Activated CD8-positive, alpha-beta T cell treated with anti-CD3 and anti-CD28 coated beads, Interleukin-2, amount 10 ng/mL, durations not matched to agents 7 days and 5 days (primary cell): ENCODE measurements at regions of chr16 and their contacts with region 1.

Region 1: GRCh38 chr16:50806099-50807062 is 64.5 kb downstream of the CYLD start:
- DNase-seq: peak; percentile 90
- ATAC-seq: peak; percentile 98
- H3K4me3 Mint-ChIP-seq: peak overlapping the region; percentile 72
- H3K27ac Mint-ChIP-seq: peak overlapping the region; percentile 62
- H3K4me1 Mint-ChIP-seq: peaks cover 18% of the 10 kb centered on the region
- H3K27me3 Mint-ChIP-seq: no peaks in the 10 kb centered on the region

Region 2: DNA sequence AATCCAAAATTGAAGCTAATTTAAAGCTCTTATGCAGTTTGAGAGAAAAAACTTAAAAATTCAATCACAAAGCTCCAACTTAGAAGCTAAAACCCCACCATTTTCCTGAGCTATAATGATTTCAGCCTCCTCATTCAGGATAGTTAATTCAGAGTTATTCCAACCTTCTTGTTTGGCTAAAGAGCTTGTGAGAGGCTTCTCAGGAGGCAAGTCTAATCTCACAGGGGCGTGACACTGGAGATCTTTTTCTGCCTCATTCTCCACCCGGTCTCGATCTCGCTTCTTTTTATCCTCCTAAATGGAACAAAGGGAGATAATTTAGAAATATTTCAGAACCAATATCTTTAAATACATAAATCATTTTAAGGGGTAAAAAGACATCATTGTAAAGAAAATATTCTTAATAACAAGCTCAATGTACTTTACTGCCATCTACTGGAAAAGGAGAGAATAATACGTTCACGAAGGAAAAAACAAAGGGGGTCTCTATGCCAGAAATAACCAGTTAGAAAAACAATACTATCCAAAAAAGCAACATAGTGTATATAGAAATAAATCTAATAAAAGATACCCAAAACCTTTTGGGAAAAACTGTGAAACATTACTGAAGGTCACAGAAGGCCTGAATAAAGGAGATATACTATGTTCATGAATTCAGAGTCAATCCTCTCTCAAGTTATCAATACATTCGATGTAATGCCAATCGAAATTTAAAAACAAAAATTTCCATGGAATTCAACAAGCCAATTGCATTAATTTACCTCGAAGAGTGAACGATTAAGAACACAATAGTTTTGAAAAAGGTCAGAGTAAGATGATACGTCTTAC is 451.5 kb before region 1 on chr16:
- CTCF ChIA-PET with region 1: interaction called, 37 read pairs
- POLR2A ChIA-PET with region 1: no interaction called
- DNase-seq: no peak
- ATAC-seq: no peak
- H3K4me3 Mint-ChIP-seq: no peak overlapping the region
- H3K27ac Mint-ChIP-seq: no peak overlapping the region
- H3K4me1 Mint-ChIP-seq: peaks cover 30% of the 10 kb centered on the region
- H3K27me3 Mint-ChIP-seq: no peaks in the 10 kb centered on the region

Region 3: GRCh38 chr16:50611332-50611934 is 194.9 kb before region 1 on chr16:
- CTCF ChIA-PET with region 1: interaction called, 13 read pairs
- POLR2A ChIA-PET with region 1: no interaction called
- DNase-seq: no peak
- ATAC-seq: peak; percentile 35
- H3K4me3 Mint-ChIP-seq: no peak overlapping the region
- H3K27ac Mint-ChIP-seq: no peak overlapping the region
- H3K4me1 Mint-ChIP-seq: peaks cover 4% of the 10 kb centered on the region
- H3K27me3 Mint-ChIP-seq: no peaks in the 10 kb centered on the region

Region 4: DNA sequence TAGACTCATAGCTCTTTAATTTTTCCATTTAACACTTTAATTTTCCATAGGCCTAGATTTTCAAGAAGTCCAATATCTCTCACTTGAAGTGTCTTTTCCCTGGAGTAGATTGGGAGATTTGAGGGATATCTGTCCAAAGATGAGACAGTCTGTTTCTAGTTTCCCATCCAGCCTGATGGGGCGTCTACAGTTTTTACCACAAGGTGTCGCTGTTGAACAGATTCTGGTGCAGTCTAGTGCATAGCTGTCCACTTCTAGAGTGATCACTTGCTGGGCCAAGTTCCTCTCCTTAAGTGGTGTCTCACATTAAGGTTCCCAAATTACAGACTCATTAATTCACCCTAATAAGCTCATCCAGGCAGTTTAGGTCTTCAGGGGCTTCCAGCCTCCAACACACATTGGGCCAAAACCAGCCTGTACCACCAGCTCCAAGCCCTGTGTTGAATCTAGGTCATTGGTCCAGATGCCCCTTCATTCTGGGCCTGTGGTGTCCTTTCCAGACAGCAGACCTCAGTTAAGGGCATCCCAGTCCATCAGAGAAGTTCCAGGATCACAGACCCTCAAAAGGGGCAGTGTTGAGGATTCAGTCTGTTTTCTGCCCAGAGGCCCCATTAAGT is 134.6 kb before region 1 on chr16:
- CTCF ChIA-PET with region 1: interaction called, 221 read pairs
- POLR2A ChIA-PET with region 1: interaction called, 11 read pairs
- DNase-seq: peak; percentile 74
- ATAC-seq: peak; percentile 14
- H3K4me3 Mint-ChIP-seq: no peak overlapping the region
- H3K27ac Mint-ChIP-seq: no peak overlapping the region
- H3K4me1 Mint-ChIP-seq: peaks cover 40% of the 10 kb centered on the region
- H3K27me3 Mint-ChIP-seq: no peaks in the 10 kb centered on the region

Region 5: DNA sequence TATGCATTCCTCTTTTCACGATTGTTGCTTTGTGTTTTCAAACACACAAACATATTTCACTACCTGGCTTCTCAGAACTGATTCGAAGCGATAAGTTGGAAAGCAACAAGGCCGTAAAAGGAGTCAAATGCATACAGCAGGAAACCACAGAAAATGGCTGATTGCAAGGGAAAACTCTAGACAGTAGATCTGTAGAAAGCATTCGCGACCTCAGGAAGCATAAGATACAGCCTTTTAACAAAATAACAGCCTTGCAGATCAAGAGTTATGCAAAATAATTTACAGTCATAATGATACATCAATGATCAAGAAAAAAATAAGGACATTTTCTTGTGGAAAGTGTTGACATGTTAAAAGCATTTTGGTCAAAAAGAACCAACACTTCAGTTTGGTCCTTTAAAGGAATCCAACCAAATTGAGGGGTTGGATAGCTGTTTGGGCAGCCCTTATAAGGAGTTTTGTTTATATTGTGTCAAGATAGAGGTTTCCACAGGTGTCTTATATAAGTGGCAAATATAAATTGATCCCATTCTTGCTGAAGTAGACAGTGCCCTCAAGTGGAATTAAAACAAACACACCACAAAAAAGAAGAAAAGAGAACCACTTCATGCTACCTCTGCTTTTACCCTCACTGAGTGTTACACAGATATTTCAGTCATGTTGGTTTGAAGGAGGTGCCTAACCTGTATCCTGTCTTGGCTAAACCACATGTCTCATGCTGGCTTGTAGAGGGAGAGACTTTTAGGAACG is 59.0 kb before region 1 on chr16:
- CTCF ChIA-PET with region 1: interaction called, 62 read pairs
- POLR2A ChIA-PET with region 1: interaction called, 3 read pairs
- DNase-seq: peak; percentile 61
- ATAC-seq: peak; percentile 72
- H3K4me3 Mint-ChIP-seq: peak overlapping the region; percentile 80
- H3K27ac Mint-ChIP-seq: peak overlapping the region; percentile 95
- H3K4me1 Mint-ChIP-seq: peaks cover 61% of the 10 kb centered on the region
- H3K27me3 Mint-ChIP-seq: no peaks in the 10 kb centered on the region

Region 6: GRCh38 chr16:50781043-50781442 is 25.3 kb before region 1 on chr16:
- CTCF ChIA-PET with region 1: interaction called, 36 read pairs
- POLR2A ChIA-PET with region 1: interaction called, 3 read pairs
- DNase-seq: no peak
- ATAC-seq: no peak
- H3K4me3 Mint-ChIP-seq: no peak overlapping the region
- H3K27ac Mint-ChIP-seq: peak overlapping the region; percentile 12
- H3K4me1 Mint-ChIP-seq: peaks cover 17% of the 10 kb centered on the region
- H3K27me3 Mint-ChIP-seq: no peaks in the 10 kb centered on the region